Right ventricle myocardium superior (tissue), 1 donor: ENCODE measurements at regions of chr19 and their contacts with region 1.

Region 1: GRCh38 chr19:39435499-39436349 is at the start of gene RPS16:
- DNase-seq: peak; percentile 99
- ATAC-seq: peak; percentile 99
- total RNA-seq, gene RPS16: 1,176 TPM

Region 2: DNA sequence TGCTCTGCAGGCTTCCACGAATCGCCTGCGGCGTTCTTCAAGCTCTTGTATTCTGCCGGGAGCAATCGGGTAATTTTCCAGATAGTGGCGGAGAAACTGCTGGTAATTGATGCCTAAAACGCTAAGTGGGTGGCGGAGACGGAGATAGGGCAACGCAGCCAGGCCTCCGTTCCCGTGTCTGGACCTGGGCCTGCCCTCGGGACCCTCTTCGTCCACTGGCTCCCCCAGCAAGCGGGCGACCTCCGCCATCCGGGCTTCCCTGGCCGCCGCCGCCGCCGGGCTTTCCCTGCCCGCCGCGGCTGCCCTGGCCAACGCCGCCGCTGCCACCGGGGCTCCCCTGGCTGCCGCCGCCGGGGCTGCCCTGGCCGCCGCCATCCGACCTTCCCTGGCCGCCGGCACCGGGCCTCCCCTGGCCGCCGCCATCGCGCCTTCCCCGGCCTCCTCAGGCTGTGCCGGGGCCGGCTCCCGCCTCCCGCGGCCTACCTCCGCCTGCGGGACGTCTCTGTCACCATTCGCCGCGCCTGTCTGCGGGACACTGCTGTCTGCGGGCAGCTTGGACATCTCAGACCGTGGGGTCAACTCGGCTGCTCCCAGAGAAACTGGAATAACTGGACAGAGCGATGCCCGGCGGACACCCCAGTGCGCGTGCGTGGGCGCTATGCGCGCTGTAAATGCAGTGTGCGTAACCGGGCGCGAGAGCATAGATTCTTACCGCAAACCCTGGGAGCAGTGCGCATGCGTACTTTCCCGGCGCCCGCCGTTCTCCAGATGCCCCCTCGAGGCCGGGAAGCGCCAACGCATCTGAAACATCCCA is 104.0 kb after region 1 on chr19 and contains the start of gene EID2:
- intact Hi-C with region 1: loop called (anchors 5 kb)
- DNase-seq: peak; percentile 98
- ATAC-seq: peak; percentile 99
- total RNA-seq, gene EID2: 10.3 TPM